MCF 10A (cell line): ENCODE measurements at regions of chr20 and their contacts with region 1.

Region 1: DNA sequence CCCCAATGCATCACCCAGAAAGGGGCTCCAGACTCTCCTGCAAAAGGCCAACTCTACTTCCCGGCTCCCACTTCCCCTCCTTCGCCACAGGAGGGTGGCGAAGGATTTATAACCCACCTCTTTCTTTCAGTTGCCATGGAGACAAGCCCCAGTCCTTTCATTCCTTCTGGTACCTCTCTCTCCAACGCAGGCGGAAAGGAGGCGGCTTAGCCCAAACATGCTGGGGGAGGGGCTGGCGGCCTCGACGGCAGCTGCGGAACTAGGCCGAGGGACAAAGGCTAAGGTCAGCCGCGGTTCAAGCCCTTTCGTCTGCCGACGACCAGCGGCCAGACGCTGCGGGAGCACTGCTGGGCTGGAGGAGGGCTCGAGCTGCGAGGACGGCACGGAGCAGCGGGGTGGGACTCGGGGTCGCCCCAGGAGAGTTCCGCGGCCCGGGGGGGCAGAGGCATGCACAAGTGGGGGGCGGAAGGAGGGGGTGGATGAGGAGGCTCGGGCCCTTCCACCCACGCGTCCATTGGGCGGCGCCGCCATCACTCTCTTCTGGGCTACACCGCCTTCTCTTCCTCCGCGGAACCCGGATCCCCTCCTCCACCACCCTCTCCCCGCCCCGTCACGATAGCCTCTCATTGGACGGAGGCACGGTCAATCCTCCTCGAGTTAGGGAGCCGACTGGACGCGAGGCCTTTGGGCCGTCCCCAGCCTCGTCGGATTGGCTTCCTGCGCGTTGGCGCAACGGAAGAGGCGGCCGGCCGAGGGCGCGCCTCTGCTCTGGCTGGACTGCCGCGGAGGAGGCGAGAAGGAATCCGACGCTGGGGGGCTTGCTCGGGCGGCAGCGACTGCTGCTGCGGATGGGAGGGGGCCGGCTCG is at the start of gene PANK2:
- DNase-seq: peak; percentile 99
- H3K4me3 Mint-ChIP-seq: peak within 1 kb of the TSS; percentile 91
- H3K27ac Mint-ChIP-seq: peak within 1 kb of the TSS; percentile 96
- H3K4me1 Mint-ChIP-seq: peaks cover 19% of the 10 kb centered on the region
- H3K27me3 Mint-ChIP-seq: no peaks in the 10 kb centered on the region
- CTCF ChIP-seq: peak; percentile 11
- total RNA-seq, gene PANK2: 29.2 and 32.8 TPM in 2 replicates

Region 2: GRCh38 chr20:3760655-3761348 is 128.1 kb before region 1 on chr20:
- CTCF ChIA-PET with region 1: no interaction called
- POLR2A ChIA-PET with region 1: no interaction called
- intact Hi-C with region 1: no loop called
- DNase-seq: no peak
- H3K4me3 Mint-ChIP-seq: no peak overlapping the region
- H3K27ac Mint-ChIP-seq: no peak overlapping the region
- H3K4me1 Mint-ChIP-seq: peaks cover 2% of the 10 kb centered on the region
- H3K27me3 Mint-ChIP-seq: no peaks in the 10 kb centered on the region
- CTCF ChIP-seq: no peak

Region 3: DNA sequence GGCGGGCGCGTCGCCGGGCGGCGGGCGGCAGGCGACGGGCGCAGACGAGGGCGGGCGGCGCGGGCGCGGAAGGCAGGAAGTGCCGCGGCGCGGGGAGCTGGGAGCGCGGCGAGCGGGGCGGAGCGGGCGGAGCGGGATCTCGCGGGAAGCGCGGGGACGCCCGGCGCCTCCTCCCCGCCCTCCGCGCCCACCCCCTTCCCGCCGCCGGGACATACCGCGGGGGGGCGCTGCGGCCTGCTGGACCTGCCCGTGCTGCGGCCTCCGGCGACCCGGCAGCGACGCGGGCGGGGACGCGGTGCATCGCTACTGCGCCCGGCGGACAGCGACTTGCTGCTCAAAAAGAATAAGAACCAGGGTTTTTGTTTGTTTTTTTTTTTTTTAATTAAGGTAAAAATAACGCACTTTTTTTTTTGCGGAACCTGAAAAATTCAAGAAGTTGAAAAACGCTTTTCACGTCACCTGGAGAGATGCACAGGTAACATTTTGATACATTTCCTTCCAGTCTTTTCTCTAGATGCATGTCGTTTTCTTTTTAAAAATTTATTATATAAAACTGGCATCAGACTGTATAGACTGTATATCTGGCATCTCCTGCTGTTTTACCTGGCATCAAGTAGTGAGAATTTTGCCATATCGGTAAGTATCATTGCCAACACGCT is 102.1 kb before region 1 on chr20 and contains the start of gene CENPB:
- CTCF ChIA-PET with region 1: interaction called, 3 read pairs
- POLR2A ChIA-PET with region 1: interaction called, 14 read pairs
- intact Hi-C with region 1: no loop called
- DNase-seq: peak; percentile 84
- H3K4me3 Mint-ChIP-seq: peak within 1 kb of the TSS; percentile 76
- H3K27ac Mint-ChIP-seq: peak within 1 kb of the TSS; percentile 42
- H3K4me1 Mint-ChIP-seq: peaks cover 33% of the 10 kb centered on the region
- H3K27me3 Mint-ChIP-seq: no peaks in the 10 kb centered on the region
- CTCF ChIP-seq: peak; percentile 88
- total RNA-seq, gene CENPB: 51.5 and 54.8 TPM in 2 replicates

Region 4: DNA sequence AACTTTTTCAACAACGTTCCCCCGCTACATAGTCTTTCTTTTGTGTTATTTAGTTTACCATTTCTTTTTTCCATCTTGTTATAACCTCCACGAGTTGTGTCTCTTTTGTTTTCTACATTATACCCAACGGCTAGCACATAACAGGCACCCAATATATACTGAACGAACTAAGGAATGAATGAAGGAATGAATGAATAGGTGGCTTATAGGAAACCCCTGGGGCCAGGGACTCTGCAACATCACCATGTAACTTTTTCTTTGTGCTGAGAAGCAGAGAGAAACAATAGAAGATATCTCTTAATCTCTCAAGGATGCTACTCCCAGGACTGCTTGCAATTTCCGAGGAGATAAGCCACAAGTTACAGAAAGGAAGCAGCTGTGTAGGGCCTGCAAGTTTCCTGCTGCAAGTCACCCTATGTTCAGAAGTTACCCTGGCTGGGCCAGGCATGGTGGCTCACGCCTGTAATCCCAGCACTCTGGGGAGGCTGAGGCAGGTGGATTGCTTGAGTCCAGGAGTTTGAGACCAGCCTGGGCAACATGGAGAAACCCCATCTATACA is 49.6 kb before region 1 on chr20:
- CTCF ChIA-PET with region 1: no interaction called
- POLR2A ChIA-PET with region 1: no interaction called
- intact Hi-C with region 1: no loop called
- DNase-seq: no peak
- H3K4me3 Mint-ChIP-seq: no peak overlapping the region
- H3K27ac Mint-ChIP-seq: no peak overlapping the region
- H3K4me1 Mint-ChIP-seq: no peaks in the 10 kb centered on the region
- H3K27me3 Mint-ChIP-seq: no peaks in the 10 kb centered on the region
- CTCF ChIP-seq: no peak

Region 5: DNA sequence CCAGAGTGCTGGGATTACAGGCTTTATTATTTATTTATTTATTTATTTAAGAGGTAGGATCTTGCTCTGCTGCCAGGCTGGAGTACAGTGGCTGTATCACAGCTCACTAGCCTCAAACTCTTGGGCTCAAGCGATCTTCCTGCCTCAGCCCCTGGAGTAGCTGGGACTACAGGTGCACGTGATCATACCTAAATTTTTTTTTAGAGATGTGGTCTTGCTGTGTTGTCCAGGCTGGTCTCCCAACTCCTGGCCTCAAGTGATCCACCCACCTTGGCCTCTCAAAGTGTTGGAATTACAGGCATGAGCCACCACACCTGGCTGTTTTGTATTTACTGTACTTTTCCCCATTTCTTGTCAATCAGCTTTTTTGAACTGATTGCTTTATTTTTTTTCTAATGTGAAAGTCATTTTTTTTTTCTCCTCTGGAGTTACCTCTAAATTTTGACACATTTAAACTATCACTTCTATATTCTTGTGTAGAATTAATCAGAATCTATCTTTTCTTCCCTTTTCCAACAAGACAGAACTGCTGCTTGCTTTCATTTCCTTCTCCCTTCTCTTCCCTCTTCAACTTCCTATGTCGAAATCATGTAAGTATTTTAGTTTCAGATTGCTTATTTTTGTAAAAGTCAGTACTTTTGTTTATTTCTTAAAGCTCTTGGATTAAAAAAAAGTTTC is 12.3 kb after region 1 on chr20:
- CTCF ChIA-PET with region 1: interaction called, 4 read pairs
- POLR2A ChIA-PET with region 1: interaction called, 50 read pairs
- intact Hi-C with region 1: no loop called
- DNase-seq: no peak
- H3K4me3 Mint-ChIP-seq: no peak overlapping the region
- H3K27ac Mint-ChIP-seq: peak overlapping the region; percentile 74
- H3K4me1 Mint-ChIP-seq: peaks cover 39% of the 10 kb centered on the region
- H3K27me3 Mint-ChIP-seq: no peaks in the 10 kb centered on the region
- CTCF ChIP-seq: no peak

Region 6: GRCh38 chr20:3927486-3928291 is 38.8 kb after region 1 on chr20:
- CTCF ChIA-PET with region 1: no interaction called
- POLR2A ChIA-PET with region 1: interaction called, 14 read pairs
- intact Hi-C with region 1: loop called (anchors 2 kb)
- DNase-seq: peak; percentile 77
- H3K4me3 Mint-ChIP-seq: peak overlapping the region; percentile 8
- H3K27ac Mint-ChIP-seq: peak overlapping the region; percentile 80
- H3K4me1 Mint-ChIP-seq: peaks cover 57% of the 10 kb centered on the region
- H3K27me3 Mint-ChIP-seq: no peaks in the 10 kb centered on the region
- CTCF ChIP-seq: no peak

Region 7: GRCh38 chr20:4082406-4083097 is 193.7 kb after region 1 on chr20:
- CTCF ChIA-PET with region 1: interaction called, 3 read pairs
- POLR2A ChIA-PET with region 1: interaction called, 3 read pairs
- intact Hi-C with region 1: loop called (anchors 1 kb)
- DNase-seq: no peak
- H3K4me3 Mint-ChIP-seq: no peak overlapping the region
- H3K27ac Mint-ChIP-seq: no peak overlapping the region
- H3K4me1 Mint-ChIP-seq: peaks cover 22% of the 10 kb centered on the region
- H3K27me3 Mint-ChIP-seq: no peaks in the 10 kb centered on the region
- CTCF ChIP-seq: no peak